A549 (cell line): ENCODE measurements at regions of chr19 and their contacts with region 1.

Region 1: GRCh38 chr19:50777754-50778303 is 7.6 kb downstream of the GPR32 start:
- DNase-seq: peak in 1 of 2 experiments; percentile 71
- ATAC-seq: peak; percentile 36 to 62; a peak in 5 of 6 replicates
- H3K4me3 ChIP-seq: peak overlapping the region; percentile 29; the same call in 2 of the 3 replicates
- H3K27ac ChIP-seq: no peak overlapping the region
- H3K4me1 ChIP-seq: peaks cover 14% of the 10 kb centered on the region; the same call in 1 of the 3 replicates
- CTCF ChIP-seq: no peak
- EP300 ChIP-seq: no peak
- POLR2A ChIP-seq: no peak
- RAD21 ChIP-seq: no peak

Region 2: DNA sequence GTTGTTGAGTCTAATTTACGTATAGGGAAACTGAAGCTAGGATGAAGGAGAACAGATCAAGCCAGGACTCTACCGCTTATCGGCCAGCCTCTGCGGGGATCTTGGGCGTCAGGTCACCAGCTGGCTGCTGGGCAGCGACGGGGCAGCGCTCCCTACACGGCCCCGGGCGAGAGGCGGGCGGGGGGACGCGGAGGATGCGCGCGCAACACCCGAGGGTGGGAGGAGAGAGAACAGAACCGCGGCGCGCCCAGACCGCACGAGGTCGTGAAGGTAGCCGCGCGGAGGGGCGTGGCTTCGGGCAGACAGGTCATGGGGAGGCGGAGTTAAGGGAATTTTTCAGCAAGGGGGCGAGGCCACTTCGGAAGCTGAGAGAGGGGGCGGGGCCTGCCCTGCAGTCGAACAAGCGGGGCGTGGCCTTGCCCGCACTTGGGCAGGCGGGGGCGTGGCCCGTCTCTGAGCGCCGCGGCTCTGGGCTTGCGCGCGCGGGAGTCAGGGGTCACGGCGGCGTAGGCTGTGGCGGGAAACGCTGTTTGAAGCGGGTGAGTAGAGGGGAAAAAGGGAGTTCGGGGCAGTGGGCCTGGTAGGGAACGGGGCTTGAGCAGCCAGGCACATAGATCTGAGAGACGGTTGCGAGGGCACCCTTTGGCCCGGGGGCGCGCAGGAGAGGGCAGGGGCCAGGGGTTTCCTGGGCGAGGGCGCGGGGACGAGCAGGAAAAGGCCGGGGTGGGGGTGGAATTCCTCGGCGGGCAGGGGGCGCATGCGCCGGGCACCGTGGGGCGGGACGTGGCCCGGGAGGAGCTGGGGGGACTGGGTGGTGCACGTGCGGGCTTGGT is 393.8 kb before region 1 on chr19 and contains the start of gene POLD1:
- CTCF ChIA-PET with region 1: no interaction called
- POLR2A ChIA-PET with region 1: no interaction called
- DNase-seq: peak; percentile 99
- ATAC-seq: peak; percentile 68 to 88
- H3K4me3 ChIP-seq: peak within 1 kb of the TSS; percentile 67
- H3K27ac ChIP-seq: peak within 1 kb of the TSS; percentile 80 to 93
- H3K4me1 ChIP-seq: peaks cover 15% of the 10 kb centered on the region
- CTCF ChIP-seq: no peak
- EP300 ChIP-seq: no peak
- POLR2A ChIP-seq: peak; percentile 82
- RAD21 ChIP-seq: no peak
- polyA plus RNA-seq, gene POLD1: 24.2 and 26.1 TPM in 2 replicates

Region 3: GRCh38 chr19:50590191-50590590 is 187.6 kb before region 1 on chr19:
- CTCF ChIA-PET with region 1: interaction called, 13 read pairs
- POLR2A ChIA-PET with region 1: no interaction called
- DNase-seq: no peak
- ATAC-seq: no peak
- H3K4me3 ChIP-seq: no peak overlapping the region
- H3K27ac ChIP-seq: no peak overlapping the region
- H3K4me1 ChIP-seq: no peaks in the 10 kb centered on the region
- CTCF ChIP-seq: no peak
- EP300 ChIP-seq: no peak
- POLR2A ChIP-seq: no peak
- RAD21 ChIP-seq: no peak

Region 4: GRCh38 chr19:50607874-50608785 is 169.7 kb before region 1 on chr19:
- CTCF ChIA-PET with region 1: interaction called, 28 read pairs
- POLR2A ChIA-PET with region 1: no interaction called
- DNase-seq: peak; percentile 97 to 99
- ATAC-seq: peak; percentile 86 to 90
- H3K4me3 ChIP-seq: peak overlapping the region; percentile 28
- H3K27ac ChIP-seq: peak overlapping the region in 1 of 2 experiments; percentile 37; a peak in 3 of 6 replicates
- H3K4me1 ChIP-seq: peaks cover 5% of the 10 kb centered on the region; the same call in 1 of the 3 replicates
- CTCF ChIP-seq: peak; percentile 82
- EP300 ChIP-seq: no peak
- POLR2A ChIP-seq: no peak
- RAD21 ChIP-seq: peak; percentile 80 to 82

Region 5: GRCh38 chr19:50717026-50717723 is 60.7 kb before region 1 on chr19:
- CTCF ChIA-PET with region 1: interaction called, 272 read pairs
- POLR2A ChIA-PET with region 1: no interaction called
- DNase-seq: no peak
- ATAC-seq: 0 out of 6 replicates have a peak, but pooled peaks of 1 of the 2 experiments have one; percentile 5
- H3K4me3 ChIP-seq: no peak overlapping the region
- H3K27ac ChIP-seq: no peak overlapping the region
- H3K4me1 ChIP-seq: peaks cover 13% of the 10 kb centered on the region; the same call in 2 of the 3 replicates
- CTCF ChIP-seq: no peak
- EP300 ChIP-seq: no peak
- POLR2A ChIP-seq: no peak
- RAD21 ChIP-seq: no peak

Region 6: DNA sequence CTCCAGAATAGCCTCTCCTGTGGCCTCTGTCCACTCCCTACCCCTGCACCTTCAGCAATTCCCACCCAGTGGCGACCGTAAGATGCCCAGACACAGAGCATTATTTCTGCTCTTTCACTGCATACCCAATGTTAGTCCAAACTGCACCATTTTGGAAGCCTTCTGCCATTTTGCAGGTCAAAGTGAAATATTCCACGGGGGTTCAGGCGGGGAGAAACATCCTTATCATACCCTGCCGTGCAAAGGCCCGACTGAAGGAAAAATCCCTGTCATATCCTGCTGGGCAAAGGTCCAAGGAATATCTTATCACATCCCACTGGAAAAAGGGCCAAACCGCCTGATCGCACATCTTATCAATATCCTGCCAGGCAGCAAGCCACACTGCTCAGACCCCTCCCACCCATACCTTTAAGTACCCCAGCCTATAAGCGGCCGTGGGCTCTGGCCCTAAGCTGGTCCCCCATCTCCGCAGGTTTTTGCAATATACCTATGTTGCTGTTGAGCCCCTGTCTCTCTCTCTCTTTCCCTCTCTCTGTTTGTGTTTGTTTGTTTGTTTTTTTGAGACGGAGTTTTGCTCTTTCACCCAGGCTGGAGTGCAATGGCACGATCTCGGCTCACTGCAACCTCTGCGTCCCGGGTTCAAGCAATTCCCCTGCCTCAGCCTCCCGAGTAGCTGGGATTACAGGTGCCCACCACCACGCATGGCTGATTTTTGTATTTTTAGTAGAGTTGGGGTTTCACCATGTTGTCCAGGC is 36.5 kb before region 1 on chr19:
- CTCF ChIA-PET with region 1: interaction called, 272 read pairs
- POLR2A ChIA-PET with region 1: no interaction called
- DNase-seq: no peak
- ATAC-seq: peak in 1 of 2 experiments; percentile 30; a peak in 1 of 6 replicates
- H3K4me3 ChIP-seq: no peak overlapping the region
- H3K27ac ChIP-seq: no peak overlapping the region
- H3K4me1 ChIP-seq: no peaks in the 10 kb centered on the region
- CTCF ChIP-seq: no peak
- EP300 ChIP-seq: no peak
- POLR2A ChIP-seq: no peak
- RAD21 ChIP-seq: no peak

Region 7: GRCh38 chr19:50759886-50760285 is 17.9 kb before region 1 on chr19:
- CTCF ChIA-PET with region 1: interaction called, 10 read pairs
- POLR2A ChIA-PET with region 1: no interaction called
- DNase-seq: peak; percentile 55 to 72
- ATAC-seq: peak in 1 of 2 experiments; percentile 59; a peak in 3 of 6 replicates
- H3K4me3 ChIP-seq: no peak overlapping the region
- H3K27ac ChIP-seq: no peak overlapping the region
- H3K4me1 ChIP-seq: no peaks in the 10 kb centered on the region
- CTCF ChIP-seq: no peak
- EP300 ChIP-seq: no peak
- POLR2A ChIP-seq: no peak
- RAD21 ChIP-seq: no peak

Region 8: DNA sequence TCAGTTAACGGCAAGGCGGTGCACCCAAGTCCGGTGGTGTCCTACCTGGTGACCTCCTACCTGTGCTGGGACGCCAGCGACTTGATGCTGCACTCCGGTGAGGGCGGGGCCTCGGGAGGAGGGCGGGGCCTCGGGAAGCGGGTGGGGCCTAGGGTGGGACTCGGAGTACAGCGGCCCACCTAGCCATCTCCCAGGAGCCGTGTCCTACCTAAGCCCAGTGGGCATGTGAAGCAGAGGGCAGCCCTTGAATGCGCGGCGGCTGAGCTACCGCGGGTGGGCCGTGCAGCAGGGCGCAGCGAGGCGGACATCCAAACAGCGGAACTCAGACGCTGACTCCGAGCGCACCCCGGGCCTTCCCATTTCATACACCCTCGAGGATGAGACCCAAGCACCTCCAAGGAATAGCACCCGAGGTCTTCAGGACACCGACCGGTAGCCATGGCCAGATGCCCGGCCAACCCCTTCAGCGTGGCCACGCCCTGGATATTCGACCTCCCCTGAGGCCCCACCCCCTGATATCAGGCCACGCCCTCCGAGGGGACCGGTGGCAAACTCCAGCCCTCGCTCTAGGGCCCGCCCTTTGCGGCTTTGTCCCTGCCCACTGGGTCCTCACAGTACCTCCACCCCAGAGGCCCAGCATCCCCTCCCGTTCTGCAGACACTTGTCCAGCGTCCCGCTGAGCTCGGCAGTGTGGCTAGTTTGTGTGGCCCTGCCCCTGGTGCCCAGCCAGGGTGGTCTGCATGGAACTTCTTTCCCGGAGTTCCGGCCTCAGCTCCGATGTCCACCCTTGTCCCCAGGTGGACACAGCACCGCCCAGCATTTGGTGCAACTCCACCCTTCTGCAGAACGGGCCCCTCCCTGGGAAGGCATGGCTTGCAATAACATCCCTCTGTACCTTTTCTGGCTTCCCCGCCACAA is 40.4 kb after region 1 on chr19:
- CTCF ChIA-PET with region 1: no interaction called
- POLR2A ChIA-PET with region 1: no interaction called
- DNase-seq: peak; percentile 67 to 95
- ATAC-seq: peak; percentile 76 to 93
- H3K4me3 ChIP-seq: peak overlapping the region; percentile 68
- H3K27ac ChIP-seq: peak overlapping the region; percentile 48 to 79; a peak in 5 of 6 replicates
- H3K4me1 ChIP-seq: peaks cover 9% of the 10 kb centered on the region; the same call in 1 of the 3 replicates
- CTCF ChIP-seq: no peak
- EP300 ChIP-seq: no peak
- POLR2A ChIP-seq: no peak
- RAD21 ChIP-seq: no peak

Region 9: GRCh38 chr19:51002542-51003171 is 224.8 kb after region 1 on chr19:
- CTCF ChIA-PET with region 1: no interaction called
- POLR2A ChIA-PET with region 1: no interaction called
- DNase-seq: peak; percentile 92 to 94
- ATAC-seq: peak; percentile 74 to 89
- H3K4me3 ChIP-seq: peak overlapping the region; percentile 35
- H3K27ac ChIP-seq: no peak overlapping the region
- H3K4me1 ChIP-seq: peaks cover 6% of the 10 kb centered on the region; the same call in 2 of the 3 replicates
- CTCF ChIP-seq: no peak
- EP300 ChIP-seq: no peak
- POLR2A ChIP-seq: no peak
- RAD21 ChIP-seq: no peak